ENCODE measurements at regions of chr9 and their contacts with region 1.

Region 1: DNA sequence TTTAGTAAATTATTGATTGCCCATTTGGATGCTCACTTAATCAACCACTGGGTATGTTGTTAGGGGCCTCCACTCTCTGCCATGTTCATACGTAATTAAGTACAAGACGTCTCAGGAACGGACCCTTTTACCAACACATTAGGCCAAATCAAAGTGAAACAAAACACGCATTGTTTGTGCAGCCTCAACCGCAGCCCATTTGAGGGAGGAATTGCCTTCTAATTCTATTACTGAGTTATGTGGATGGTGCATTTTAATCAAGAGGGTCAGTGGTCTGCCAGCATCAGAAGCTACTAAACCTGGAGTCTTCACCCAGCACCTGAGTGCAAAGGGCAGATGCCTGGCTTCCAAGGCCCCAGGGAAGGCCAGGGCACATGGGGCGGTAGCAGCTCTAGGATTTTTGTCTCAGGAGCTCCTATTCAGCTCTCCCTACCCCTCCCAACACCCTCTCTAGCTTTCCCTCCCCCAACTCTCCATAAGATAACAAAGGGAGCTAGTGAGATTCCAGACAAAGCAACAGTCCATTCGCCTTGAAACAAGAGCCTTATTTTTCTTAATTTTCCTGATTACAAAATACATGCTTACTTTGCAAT is 7.9 kb upstream of the MED27 start:
- DNase-seq: no peak
- H3K4me3 ChIP-seq: peak overlapping the region in 9 of 59 donors; percentile 4 to 29 (median 16)
- H3K27ac ChIP-seq: peak overlapping the region in 49 of 59 donors; percentile 6 to 86 (median 68)
- H3K27me3 ChIP-seq: peaks cover 0 to 3% (median 0%) of the 10 kb centered on the region in 45 donors
- CTCF ChIP-seq: peak in 1 of 56 donors; percentile 19

Region 2: GRCh38 chr9:132135456-132135855 is 47.9 kb after region 1 on chr9:
- intact Hi-C with region 1: loop called in 1 of 2 experiments (anchors 5 kb)
- DNase-seq: peak in 2 of 10 donors; percentile 33 to 34
- H3K4me3 ChIP-seq: no peak overlapping the region
- H3K27ac ChIP-seq: peak overlapping the region in 52 of 59 donors; percentile 5 to 92 (median 70)
- H3K27me3 ChIP-seq: peaks cover 0 to 11% (median 0%) of the 10 kb centered on the region in 45 donors
- CTCF ChIP-seq: peak in 1 of 56 donors; percentile 9

Measured in dorsolateral prefrontal cortex (tissue), 120 donors.